Endothelial cell of umbilical vein (primary cell): ENCODE measurements at regions of chr7 and their contacts with region 1.

Region 1: DNA sequence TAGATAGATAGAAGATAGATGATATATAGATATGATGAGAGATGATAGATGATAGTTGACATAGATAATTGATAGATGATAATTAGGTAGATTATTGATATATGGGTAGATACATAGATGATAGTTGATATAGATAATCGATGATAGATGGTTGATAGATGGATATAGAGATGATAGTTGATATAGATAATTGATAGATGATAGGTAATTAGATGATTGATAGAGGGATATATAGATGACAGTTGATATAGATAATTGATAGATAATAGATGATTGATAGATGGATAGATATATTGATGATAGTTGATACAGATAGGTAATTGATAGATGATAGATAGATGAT is 72.3 kb downstream of the PRR15 start:
- DNase-seq: no peak
- H3K4me3 ChIP-seq: no peak overlapping the region
- H3K27ac ChIP-seq: no peak overlapping the region
- H3K4me1 ChIP-seq: no peaks in the 10 kb centered on the region
- H3K27me3 ChIP-seq: no peaks in the 10 kb centered on the region
- CTCF ChIP-seq: no peak
- POLR2A ChIP-seq: no peak

Region 2: GRCh38 chr7:27921081-27921836 is 1714.7 kb before region 1 on chr7:
- CTCF ChIA-PET with region 1: no interaction called
- POLR2A ChIA-PET with region 1: no interaction called
- dilution Hi-C with region 1: no loop called
- intact Hi-C with region 1: no loop called
- DNase-seq: peak; percentile 94
- H3K4me3 ChIP-seq: no peak overlapping the region
- H3K27ac ChIP-seq: no peak overlapping the region
- H3K4me1 ChIP-seq: peaks cover 37% of the 10 kb centered on the region
- H3K27me3 ChIP-seq: no peaks in the 10 kb centered on the region
- CTCF ChIP-seq: peak; percentile 42 to 45
- POLR2A ChIP-seq: no peak

Region 3: DNA sequence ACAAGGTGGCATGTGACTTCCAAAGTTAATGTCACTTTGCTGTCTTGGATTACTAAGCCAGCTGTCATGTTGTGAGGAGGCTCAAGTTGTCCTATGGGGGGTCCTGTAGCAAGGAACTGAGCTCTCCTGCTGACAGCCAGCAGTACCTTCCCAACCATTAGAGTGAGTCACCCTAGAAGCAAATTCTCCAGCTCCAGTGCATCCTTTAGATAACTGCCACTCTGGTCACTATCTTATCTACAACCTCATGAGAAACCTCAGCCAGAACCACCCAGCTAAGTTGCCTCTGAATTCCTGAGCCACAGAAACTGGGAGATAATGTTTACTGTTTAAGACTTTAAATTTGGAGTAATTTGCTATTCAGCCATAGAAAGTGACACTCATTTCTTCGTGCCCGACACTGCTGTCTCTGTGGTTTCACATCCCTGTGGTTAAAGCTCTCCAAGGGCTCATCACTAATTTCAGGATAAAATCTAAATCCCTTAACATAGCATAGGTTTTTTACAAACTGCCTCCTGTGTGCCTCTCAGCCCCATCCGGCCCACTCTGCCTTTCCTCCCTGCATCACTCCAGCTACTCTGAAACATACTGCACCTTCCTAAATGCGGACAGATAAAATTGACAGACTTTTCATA is 11.2 kb after region 1 on chr7:
- CTCF ChIA-PET with region 1: interaction called, 13 read pairs
- POLR2A ChIA-PET with region 1: no interaction called
- dilution Hi-C with region 1: no loop called
- intact Hi-C with region 1: no loop called
- DNase-seq: no peak
- H3K4me3 ChIP-seq: no peak overlapping the region
- H3K27ac ChIP-seq: no peak overlapping the region
- H3K4me1 ChIP-seq: no peaks in the 10 kb centered on the region
- H3K27me3 ChIP-seq: no peaks in the 10 kb centered on the region
- CTCF ChIP-seq: no peak
- POLR2A ChIP-seq: no peak

Region 4: GRCh38 chr7:30469303-30469702 is 833.3 kb after region 1 on chr7:
- CTCF ChIA-PET with region 1: no interaction called
- POLR2A ChIA-PET with region 1: no interaction called
- dilution Hi-C with region 1: no loop called
- intact Hi-C with region 1: no loop called
- DNase-seq: peak; percentile 99
- H3K4me3 ChIP-seq: no peak overlapping the region
- H3K27ac ChIP-seq: peak overlapping the region; percentile 93
- H3K4me1 ChIP-seq: peaks cover 60% of the 10 kb centered on the region
- H3K27me3 ChIP-seq: no peaks in the 10 kb centered on the region
- CTCF ChIP-seq: peak; percentile 49 to 52
- POLR2A ChIP-seq: peak; percentile 43